Colonic mucosa (tissue), 4 donors: ENCODE measurements at regions of chr3 and their contacts with region 1.

Region 1: DNA sequence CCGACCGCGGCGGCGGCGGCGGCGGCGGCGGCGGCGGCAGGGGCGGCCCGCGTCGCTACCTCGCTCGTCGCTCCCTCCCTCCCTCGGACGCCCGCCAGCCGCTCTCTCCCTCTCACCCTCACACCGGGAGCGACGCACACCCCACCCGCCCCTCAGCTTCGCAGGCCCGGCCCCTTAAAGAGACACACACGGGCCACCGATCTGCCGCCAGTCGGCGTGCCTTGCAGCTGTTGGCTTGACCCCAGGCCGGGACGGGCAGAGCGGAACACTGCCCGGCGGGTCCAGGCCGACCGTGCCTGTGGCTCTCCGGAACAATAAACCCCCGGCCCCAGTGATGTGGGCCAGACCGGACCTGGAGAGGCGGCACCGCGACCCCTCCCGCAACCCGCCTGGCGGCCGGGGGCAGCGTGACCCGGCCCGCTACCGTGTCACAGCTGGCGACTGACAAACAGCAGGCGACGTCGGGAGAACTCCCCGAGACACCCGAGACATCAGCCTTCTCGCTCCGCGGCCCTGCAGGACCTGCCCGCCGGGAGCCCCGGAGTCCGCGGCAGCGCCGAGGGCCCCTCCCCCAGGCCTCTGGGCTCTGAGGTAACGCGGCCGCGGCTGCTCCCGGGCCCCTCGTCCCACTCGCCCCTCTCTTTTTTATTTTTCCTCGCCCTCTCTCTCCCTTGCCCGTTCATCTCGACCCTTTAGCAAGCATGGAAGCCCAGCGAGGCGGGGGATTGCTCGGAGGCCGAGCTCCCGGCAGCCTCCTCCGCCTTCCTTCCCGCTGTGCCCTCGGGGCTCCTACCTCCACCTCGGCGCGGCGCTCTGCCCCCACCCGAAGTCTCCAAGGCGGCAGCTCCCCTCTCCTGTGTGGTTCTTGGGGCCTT is at the start of gene SETD2:
- DNase-seq: peak; percentile 95
- H3K4me3 ChIP-seq: peak within 1 kb of the TSS; percentile 93
- H3K27ac ChIP-seq: peak within 1 kb of the TSS; percentile 96
- H3K4me1 ChIP-seq: peaks cover 20% of the 10 kb centered on the region
- H3K27me3 ChIP-seq: no peaks in the 10 kb centered on the region
- CTCF ChIP-seq: no peak
- total RNA-seq, gene SETD2: 39.5 to 48.6 TPM

Region 2: GRCh38 chr3:47324278-47324865 is 160.1 kb after region 1 on chr3:
- intact Hi-C with region 1: loop called (anchors 10 kb)
- DNase-seq: peak; percentile 67
- H3K4me3 ChIP-seq: no peak overlapping the region
- H3K27ac ChIP-seq: no peak overlapping the region
- H3K4me1 ChIP-seq: no peaks in the 10 kb centered on the region
- H3K27me3 ChIP-seq: no peaks in the 10 kb centered on the region
- CTCF ChIP-seq: peak; percentile 78